ENCODE measurements at regions of chr16 and their contacts with region 1.

Region 1: DNA sequence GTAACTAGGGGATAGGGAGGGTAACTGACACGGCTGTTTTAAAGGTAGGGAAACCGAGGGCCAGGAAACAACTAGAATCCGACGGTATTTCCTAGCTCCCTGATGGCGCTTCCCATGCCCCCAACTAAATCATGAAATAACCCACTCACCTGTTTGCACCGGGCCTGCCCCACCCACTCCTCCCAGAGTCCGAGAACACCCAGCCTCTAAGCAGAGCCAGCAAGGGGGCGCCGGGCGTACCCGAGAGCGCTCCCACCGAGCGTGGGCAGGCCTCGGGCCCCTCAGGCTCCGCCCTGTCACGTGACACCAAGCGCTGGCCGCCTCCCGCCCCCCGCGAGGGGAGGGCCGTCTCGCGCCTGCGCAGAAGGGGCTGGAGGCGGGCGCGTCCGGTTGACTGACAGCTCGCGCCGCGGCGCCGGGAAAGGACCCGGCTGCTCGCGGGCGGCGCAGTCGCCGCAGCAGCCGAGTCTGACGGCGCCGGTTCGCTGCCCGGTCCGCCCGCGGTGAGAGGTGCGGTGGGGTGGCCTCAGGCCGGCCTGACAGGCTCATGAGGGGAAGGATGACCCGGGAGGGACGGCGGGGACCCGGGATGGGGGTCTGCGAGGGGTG is at the start of gene KIAA0513:
- DNase-seq: peak; percentile 91 to 95 (median 92)
- H3K4me3 ChIP-seq: peak within 1 kb of the TSS; percentile 84 to 98 (median 93)
- H3K4me3 Mint-ChIP-seq: peak within 1 kb of the TSS; percentile 94 to 95
- H3K27ac ChIP-seq: peak within 1 kb of the TSS; percentile 81 to 84
- H3K27ac Mint-ChIP-seq: peak within 1 kb of the TSS; percentile 93 to 97 (median 96)
- H3K4me1 ChIP-seq: peaks cover 59 to 70% of the 10 kb centered on the region in 2 donors
- H3K4me1 Mint-ChIP-seq: peaks cover 72% of the 10 kb centered on the region
- H3K27me3 ChIP-seq: no peaks in the 10 kb centered on the region
- H3K27me3 Mint-ChIP-seq: peaks cover 0 to 1% (median 0%) of the 10 kb centered on the region in 3 donors
- CTCF ChIP-seq: no peak
- polyA plus RNA-seq, gene KIAA0513: 21.4 to 77.5 (median 32.7) TPM

Region 2: GRCh38 chr16:84985079-84986065 is 42.1 kb before region 1 on chr16:
- intact Hi-C with region 1: loop called (anchors 5 kb)
- DNase-seq: peak in 2 of 3 donors; percentile 23 to 36
- H3K4me3 ChIP-seq: peak overlapping the region in 1 of 3 experiments; percentile 46
- H3K4me3 Mint-ChIP-seq: peak overlapping the region in 1 of 2 donors; percentile 11
- H3K27ac ChIP-seq: peak overlapping the region; percentile 84 to 91
- H3K27ac Mint-ChIP-seq: peak overlapping the region; percentile 85 to 99 (median 97)
- H3K4me1 ChIP-seq: peaks cover 55 to 70% of the 10 kb centered on the region in 2 donors
- H3K4me1 Mint-ChIP-seq: peaks cover 76% of the 10 kb centered on the region
- H3K27me3 ChIP-seq: no peaks in the 10 kb centered on the region
- H3K27me3 Mint-ChIP-seq: peaks cover 0 to 7% (median 0%) of the 10 kb centered on the region in 3 donors
- CTCF ChIP-seq: no peak

Region 3: DNA sequence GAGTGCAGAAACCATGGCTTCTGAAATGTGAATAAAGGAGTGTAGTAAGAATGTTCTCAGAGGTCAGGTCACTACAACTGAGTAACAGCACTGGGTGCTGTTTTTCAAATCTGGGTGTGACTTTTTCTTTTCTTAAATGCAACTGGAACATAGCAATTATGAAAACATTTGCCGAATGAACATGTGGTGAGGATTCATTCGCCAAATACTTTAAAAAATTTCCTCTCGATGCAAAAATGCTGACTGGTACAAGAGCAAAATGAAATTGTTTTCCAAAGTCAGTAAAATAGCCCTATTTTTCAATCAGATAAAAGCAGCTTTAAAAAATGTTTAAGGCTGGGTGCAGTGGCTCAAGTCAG is 34.8 kb before region 1 on chr16:
- intact Hi-C with region 1: loop called in 1 of 2 experiments (anchors 5 kb)
- DNase-seq: no peak
- H3K4me3 ChIP-seq: no peak overlapping the region
- H3K4me3 Mint-ChIP-seq: no peak overlapping the region
- H3K27ac ChIP-seq: peak overlapping the region in 1 of 2 donors; percentile 99
- H3K27ac Mint-ChIP-seq: peak overlapping the region in 5 of 7 donors; percentile 50 to 99 (median 99)
- H3K4me1 ChIP-seq: peaks cover 58 to 78% of the 10 kb centered on the region in 2 donors
- H3K4me1 Mint-ChIP-seq: peaks cover 72% of the 10 kb centered on the region
- H3K27me3 ChIP-seq: no peaks in the 10 kb centered on the region
- H3K27me3 Mint-ChIP-seq: no peaks in the 10 kb centered on the region
- CTCF ChIP-seq: no peak

Region 4: GRCh38 chr16:85010931-85011845 is 16.3 kb before region 1 on chr16 and contains the start of gene ZDHHC7:
- intact Hi-C with region 1: loop called (anchors 2 kb)
- DNase-seq: peak; percentile 80 to 86 (median 82)
- H3K4me3 ChIP-seq: peak within 1 kb of the TSS; percentile 94 to 99 (median 96)
- H3K4me3 Mint-ChIP-seq: peak within 1 kb of the TSS; percentile 97 to 99
- H3K27ac ChIP-seq: peak within 1 kb of the TSS; percentile 91 to 93
- H3K27ac Mint-ChIP-seq: peak within 1 kb of the TSS; percentile 99 to 100 (median 100)
- H3K4me1 ChIP-seq: peaks cover 86 to 87% of the 10 kb centered on the region in 2 donors
- H3K4me1 Mint-ChIP-seq: peaks cover 79% of the 10 kb centered on the region
- H3K27me3 ChIP-seq: no peaks in the 10 kb centered on the region
- H3K27me3 Mint-ChIP-seq: peaks cover 0 to 2% (median 1%) of the 10 kb centered on the region in 3 donors
- CTCF ChIP-seq: no peak
- polyA plus RNA-seq, gene ZDHHC7: 99.7 to 189 (median 129) TPM

Region 5: DNA sequence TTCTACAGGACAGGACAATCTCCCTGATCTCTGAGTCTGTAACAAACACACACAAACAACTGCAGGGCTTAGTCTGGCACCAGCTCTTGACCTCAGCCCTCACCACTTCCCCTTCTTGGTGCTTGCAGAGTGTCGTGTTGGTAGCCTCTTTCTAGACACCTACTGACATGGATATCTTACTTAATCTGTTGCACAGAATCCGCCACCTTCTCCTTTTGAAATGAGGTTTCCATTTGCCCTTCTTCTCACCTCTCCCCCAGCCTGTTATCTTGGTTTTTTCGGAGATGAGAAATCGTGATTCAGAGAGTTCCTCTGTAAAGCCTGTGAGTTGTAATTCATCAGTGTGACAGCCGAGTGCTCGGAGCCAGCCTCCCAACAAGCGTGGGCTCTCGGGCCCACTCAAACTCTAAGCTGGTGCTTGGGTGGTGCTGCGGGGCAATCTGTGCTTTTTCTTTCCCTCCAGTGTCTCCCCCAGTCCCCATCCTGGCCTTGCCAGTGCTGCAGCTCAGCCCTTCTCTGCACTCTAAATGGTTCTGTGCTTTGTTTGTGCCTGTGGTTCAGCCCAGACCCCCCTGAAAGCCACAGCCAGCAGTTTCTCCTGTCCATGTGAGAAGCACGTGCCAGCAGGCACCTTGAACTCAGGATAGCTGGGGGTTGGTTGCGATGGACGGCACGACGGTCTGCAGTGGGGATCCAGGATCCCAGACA is 28.2 kb after region 1 on chr16:
- intact Hi-C with region 1: loop called (anchors 2 to 5 kb)
- DNase-seq: peak; percentile 94 to 96 (median 96)
- H3K4me3 ChIP-seq: peak overlapping the region in 2 of 3 experiments; percentile 15 to 61
- H3K4me3 Mint-ChIP-seq: peak overlapping the region; percentile 75 to 85
- H3K27ac ChIP-seq: peak overlapping the region; percentile 88 to 91
- H3K27ac Mint-ChIP-seq: peak overlapping the region; percentile 97 to 100 (median 98)
- H3K4me1 ChIP-seq: peaks cover 62 to 83% of the 10 kb centered on the region in 2 donors
- H3K4me1 Mint-ChIP-seq: peaks cover 75% of the 10 kb centered on the region
- H3K27me3 ChIP-seq: no peaks in the 10 kb centered on the region
- H3K27me3 Mint-ChIP-seq: peaks cover 0 to 5% (median 2%) of the 10 kb centered on the region in 3 donors
- CTCF ChIP-seq: no peak

Region 6: GRCh38 chr16:85061566-85061965 is 34.1 kb after region 1 on chr16:
- intact Hi-C with region 1: loop called in 1 of 2 experiments (anchors 5 kb)
- DNase-seq: peak; percentile 89 to 97 (median 96)
- H3K4me3 ChIP-seq: peak overlapping the region in 1 of 3 experiments; percentile 55
- H3K4me3 Mint-ChIP-seq: peak overlapping the region; percentile 61 to 82
- H3K27ac ChIP-seq: peak overlapping the region; percentile 89 to 96
- H3K27ac Mint-ChIP-seq: peak overlapping the region; percentile 94 to 99 (median 98)
- H3K4me1 ChIP-seq: peaks cover 58 to 68% of the 10 kb centered on the region in 2 donors
- H3K4me1 Mint-ChIP-seq: peaks cover 65% of the 10 kb centered on the region
- H3K27me3 ChIP-seq: no peaks in the 10 kb centered on the region
- H3K27me3 Mint-ChIP-seq: no peaks in the 10 kb centered on the region
- CTCF ChIP-seq: no peak

Measured in CD14-positive monocyte (primary cell).